ENCODE measurements at regions of chr12 and their contacts with region 1.

Region 1: GRCh38 chr12:89352492-89353187 is at the start of gene DUSP6:
- DNase-seq: peak; percentile 94 to 98
- H3K4me3 ChIP-seq: peak within 1 kb of the TSS; percentile 84 to 98
- H3K27ac ChIP-seq: peak within 1 kb of the TSS; percentile 100
- H3K4me1 ChIP-seq: peaks cover 9 to 23% of the 10 kb centered on the region in 2 donors
- H3K27me3 ChIP-seq: no peaks in the 10 kb centered on the region
- CTCF ChIP-seq: no peak
- total RNA-seq, gene DUSP6: 370 TPM

Region 2: GRCh38 chr12:88141770-88142609 is 1210.7 kb before region 1 on chr12 and contains the starts of genes CEP290 and TMTC3:
- intact Hi-C with region 1: loop called (anchors 10 kb)
- DNase-seq: peak; percentile 97 to 99
- H3K4me3 ChIP-seq: peak within 1 kb of the TSS; percentile 77 to 83
- H3K27ac ChIP-seq: peak within 1 kb of the TSS; percentile 64 to 78
- H3K4me1 ChIP-seq: peaks cover 0 to 6% of the 10 kb centered on the region in 2 donors
- H3K27me3 ChIP-seq: no peaks in the 10 kb centered on the region
- CTCF ChIP-seq: no peak
- total RNA-seq, gene CEP290: 7.2 TPM
- total RNA-seq, gene TMTC3: 14.5 TPM

Region 3: GRCh38 chr12:89051065-89051677 is 301.5 kb before region 1 on chr12:
- intact Hi-C with region 1: loop called (anchors 5 kb)
- DNase-seq: no peak
- H3K4me3 ChIP-seq: no peak overlapping the region
- H3K27ac ChIP-seq: no peak overlapping the region
- H3K4me1 ChIP-seq: no peaks in the 10 kb centered on the region
- H3K27me3 ChIP-seq: no peaks in the 10 kb centered on the region
- CTCF ChIP-seq: peak; percentile 83 to 89 (median 87)

Region 4: DNA sequence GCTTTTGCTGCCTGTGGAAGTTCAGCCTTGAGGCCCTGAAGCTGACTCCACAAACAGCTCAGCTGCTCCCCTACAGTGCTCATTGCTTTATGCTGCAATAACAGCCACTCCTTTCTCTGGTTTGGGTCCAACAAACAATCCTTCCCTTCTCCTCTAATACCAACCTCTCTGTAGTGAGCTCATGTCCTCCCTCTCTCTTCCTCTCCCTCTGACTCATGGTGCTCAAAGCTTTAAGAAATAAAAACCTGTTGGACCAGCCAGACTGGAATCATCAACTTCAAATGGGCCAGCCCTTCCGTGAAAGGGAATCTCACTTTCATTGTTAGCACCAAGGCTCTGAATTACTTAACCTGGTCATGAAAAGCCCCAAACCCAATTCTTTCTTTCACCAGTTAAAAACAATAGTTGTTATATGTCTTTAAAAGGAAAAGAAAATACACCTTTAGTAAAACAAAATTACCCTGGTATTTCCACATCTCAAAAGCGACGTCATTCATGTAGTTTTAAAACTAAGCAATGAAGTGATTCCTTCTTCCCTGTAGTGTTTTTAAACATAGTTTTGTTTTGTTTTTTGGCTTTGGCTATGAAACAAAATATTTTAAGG is 126.7 kb before region 1 on chr12:
- intact Hi-C with region 1: loop called (anchors 5 kb)
- DNase-seq: peak in 1 of 2 donors; percentile 66
- H3K4me3 ChIP-seq: peak overlapping the region in 1 of 2 donors; percentile 16
- H3K27ac ChIP-seq: peak overlapping the region; percentile 12 to 44
- H3K4me1 ChIP-seq: peaks cover 0 to 9% of the 10 kb centered on the region in 2 donors
- H3K27me3 ChIP-seq: no peaks in the 10 kb centered on the region
- CTCF ChIP-seq: no peak

Region 5: GRCh38 chr12:89384050-89384758 is 31.6 kb after region 1 on chr12:
- intact Hi-C with region 1: loop called (anchors 1 kb)
- DNase-seq: peak in 1 of 2 donors; percentile 72
- H3K4me3 ChIP-seq: peak overlapping the region; percentile 1 to 41
- H3K27ac ChIP-seq: peak overlapping the region; percentile 68 to 78
- H3K4me1 ChIP-seq: peaks cover 3 to 15% of the 10 kb centered on the region in 2 donors
- H3K27me3 ChIP-seq: no peaks in the 10 kb centered on the region
- CTCF ChIP-seq: no peak

Region 6: DNA sequence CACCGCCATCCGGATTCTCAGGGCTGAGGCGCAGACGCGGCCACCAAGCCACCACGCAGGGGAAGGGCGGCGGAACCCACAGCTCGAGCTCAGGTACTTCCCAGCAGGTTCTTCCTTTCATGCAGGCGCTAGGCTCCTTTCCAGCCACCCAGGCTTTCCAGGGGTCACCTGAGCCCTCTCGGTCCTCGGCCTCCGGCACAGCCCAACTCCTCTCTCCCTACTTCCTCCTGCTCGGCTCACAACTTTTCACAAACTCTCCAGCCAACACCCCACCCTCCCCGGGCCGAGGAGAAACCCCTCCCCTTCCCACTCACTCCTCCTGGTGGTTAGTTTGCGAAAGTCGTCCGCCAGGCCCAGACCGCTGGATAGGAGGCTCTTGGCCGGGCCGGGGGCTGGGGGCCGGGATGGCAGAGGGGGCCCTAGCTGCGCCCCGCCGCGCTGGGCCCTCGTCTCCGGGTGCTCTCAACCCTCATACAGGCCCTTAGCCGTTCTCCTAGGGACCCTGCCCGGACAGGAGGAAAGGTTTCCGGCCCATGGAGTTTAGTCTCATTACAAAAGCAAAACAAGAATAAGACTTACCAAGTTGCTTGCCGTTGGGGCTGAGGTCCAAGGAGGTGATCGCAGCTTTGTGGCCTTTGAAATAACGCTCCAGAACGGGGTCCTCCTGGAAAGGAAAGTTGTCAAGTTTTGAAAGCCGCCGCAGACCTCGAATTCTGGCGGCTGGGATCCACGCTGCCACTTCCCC is 172.1 kb after region 1 on chr12 and contains the start of gene GALNT4:
- intact Hi-C with region 1: loop called (anchors 2 kb)
- DNase-seq: peak; percentile 61 to 94
- H3K4me3 ChIP-seq: peak within 1 kb of the TSS; percentile 74 to 77
- H3K27ac ChIP-seq: peak within 1 kb of the TSS; percentile 92 to 93
- H3K4me1 ChIP-seq: peaks cover 2 to 20% of the 10 kb centered on the region in 2 donors
- H3K27me3 ChIP-seq: no peaks in the 10 kb centered on the region
- CTCF ChIP-seq: peak; percentile 61 to 78 (median 74)
- total RNA-seq, gene GALNT4: 3.3 TPM